ENCODE measurements at regions of chr19 and their contacts with region 1.

Region 1: GRCh38 chr19:8269724-8270123 is 38.4 kb downstream of the CD320 start:
- DNase-seq: no peak
- H3K4me3 ChIP-seq: no peak overlapping the region
- H3K27ac ChIP-seq: no peak overlapping the region
- H3K4me1 ChIP-seq: no peaks in the 10 kb centered on the region
- H3K27me3 ChIP-seq: no peaks in the 10 kb centered on the region
- CTCF ChIP-seq: no peak

Region 2: DNA sequence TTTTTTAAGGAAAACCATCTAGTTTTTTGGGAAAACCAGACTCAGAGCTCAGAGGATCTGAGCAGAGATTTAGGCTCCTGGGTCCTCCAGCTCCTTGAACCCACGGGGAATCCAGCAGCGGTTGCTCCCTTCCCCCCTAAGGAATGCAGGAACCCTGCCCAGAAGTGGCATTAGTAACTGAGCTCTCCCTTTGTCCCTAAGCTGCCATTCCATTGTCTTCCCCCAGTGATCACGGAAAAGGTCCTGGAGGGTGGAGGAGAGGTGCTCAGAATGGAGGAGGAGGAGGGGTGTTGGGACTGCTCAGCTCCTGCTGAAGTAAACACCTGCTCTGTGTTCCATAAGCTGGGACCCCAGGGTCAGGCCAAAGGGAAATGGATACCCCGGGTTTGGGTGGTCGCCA is 800.3 kb after region 1 on chr19:
- CTCF ChIA-PET with region 1: no interaction called
- POLR2A ChIA-PET with region 1: interaction called, 16 read pairs
- intact Hi-C with region 1: no loop called
- DNase-seq: no peak
- H3K4me3 ChIP-seq: no peak overlapping the region
- H3K27ac ChIP-seq: no peak overlapping the region
- H3K4me1 ChIP-seq: peaks cover 2% of the 10 kb centered on the region
- H3K27me3 ChIP-seq: no peaks in the 10 kb centered on the region
- CTCF ChIP-seq: no peak

Measured in A673 (cell line).